ENCODE measurements at regions of chr1 and their contacts with region 1.

Region 1: GRCh38 chr1:39204441-39205081 is at the start of gene MACF1:
- DNase-seq: peak; percentile 29
- ATAC-seq: peak; percentile 17
- H3K4me3 ChIP-seq: peak within 1 kb of the TSS in 4 of 5 experiments; percentile 7 to 41 (median 22)
- H3K4me3 Mint-ChIP-seq: peak within 1 kb of the TSS; percentile 80
- H3K27ac ChIP-seq: peak within 1 kb of the TSS; percentile 17 to 33
- H3K27ac Mint-ChIP-seq: peak within 1 kb of the TSS; percentile 80
- H3K4me1 ChIP-seq: peaks cover 21 to 22% of the 10 kb centered on the region in 2 donors
- H3K4me1 Mint-ChIP-seq: peaks cover 25% of the 10 kb centered on the region
- H3K27me3 ChIP-seq: no peaks in the 10 kb centered on the region
- H3K27me3 Mint-ChIP-seq: no peaks in the 10 kb centered on the region
- CTCF ChIP-seq: no peak
- total RNA-seq, gene MACF1: 155 and 159 TPM in 2 replicates

Region 2: GRCh38 chr1:39214998-39215873 is 10.7 kb after region 1 on chr1:
- CTCF ChIA-PET with region 1: interaction called, 5 read pairs
- POLR2A ChIA-PET with region 1: interaction called, 4 read pairs
- intact Hi-C with region 1: loop called (anchors 1 kb)
- DNase-seq: peak; percentile 77
- ATAC-seq: peak; percentile 81
- H3K4me3 ChIP-seq: peak overlapping the region; percentile 45 to 79 (median 61)
- H3K4me3 Mint-ChIP-seq: peak overlapping the region; percentile 89
- H3K27ac ChIP-seq: peak overlapping the region; percentile 70 to 92
- H3K27ac Mint-ChIP-seq: peak overlapping the region; percentile 91
- H3K4me1 ChIP-seq: peaks cover 36 to 44% of the 10 kb centered on the region in 2 donors
- H3K4me1 Mint-ChIP-seq: peaks cover 49% of the 10 kb centered on the region
- H3K27me3 ChIP-seq: no peaks in the 10 kb centered on the region
- H3K27me3 Mint-ChIP-seq: no peaks in the 10 kb centered on the region
- CTCF ChIP-seq: no peak

Region 3: DNA sequence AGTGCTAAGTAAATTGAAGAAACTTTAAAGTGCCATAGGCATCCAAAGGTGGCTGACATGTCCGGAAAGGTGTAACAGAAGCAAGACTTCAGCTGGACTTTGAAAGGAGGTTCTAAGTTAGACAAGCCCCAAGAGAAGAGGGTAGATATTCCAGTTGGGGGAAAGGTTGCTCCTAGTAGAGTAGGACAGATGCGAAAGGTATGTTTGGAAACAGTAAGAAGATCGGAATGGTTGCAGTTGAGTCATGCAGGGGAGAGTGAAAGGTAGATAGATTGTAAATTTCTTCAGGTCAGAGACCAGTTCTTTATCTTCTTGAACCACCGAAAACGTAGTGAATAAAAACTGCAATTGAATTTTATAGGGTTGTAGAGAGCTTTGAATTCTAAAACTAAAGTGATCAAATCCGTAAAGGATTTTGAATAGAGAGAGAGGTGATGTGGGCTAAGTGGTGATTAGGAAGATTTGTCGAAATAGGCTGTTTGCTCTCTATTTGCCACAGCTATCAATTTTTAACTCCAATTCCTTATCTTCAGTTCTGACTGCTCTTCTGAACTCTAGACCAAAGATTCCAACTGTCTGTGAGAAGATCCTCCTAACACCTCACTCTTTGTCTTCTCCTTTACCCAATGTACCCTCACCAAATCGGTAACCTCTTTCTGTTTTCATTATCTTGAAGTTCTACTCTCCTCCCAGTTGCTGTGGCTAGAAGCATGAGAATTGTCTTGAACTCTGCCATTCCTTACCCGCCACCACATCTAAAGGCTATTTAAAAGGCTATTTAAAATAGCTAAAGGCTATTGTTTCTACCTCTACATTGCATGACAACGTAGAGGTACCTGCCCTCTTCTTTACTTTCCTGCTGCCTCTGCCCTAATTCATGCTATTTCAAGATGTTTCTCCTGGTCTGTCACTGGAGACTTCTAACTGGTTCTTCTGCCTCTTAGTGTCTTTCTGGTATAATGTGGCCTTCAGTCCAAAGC is 16.6 kb after region 1 on chr1:
- CTCF ChIA-PET with region 1: interaction called, 5 read pairs
- POLR2A ChIA-PET with region 1: no interaction called
- intact Hi-C with region 1: loop called (anchors 2 kb)
- DNase-seq: no peak
- ATAC-seq: no peak
- H3K4me3 ChIP-seq: no peak overlapping the region
- H3K4me3 Mint-ChIP-seq: no peak overlapping the region
- H3K27ac ChIP-seq: no peak overlapping the region
- H3K27ac Mint-ChIP-seq: peak overlapping the region; percentile 50
- H3K4me1 ChIP-seq: peaks cover 40 to 47% of the 10 kb centered on the region in 2 donors
- H3K4me1 Mint-ChIP-seq: peaks cover 60% of the 10 kb centered on the region
- H3K27me3 ChIP-seq: no peaks in the 10 kb centered on the region
- H3K27me3 Mint-ChIP-seq: no peaks in the 10 kb centered on the region
- CTCF ChIP-seq: no peak